Naive thymus-derived CD4-positive, alpha-beta T cell (primary cell): ENCODE measurements at regions of chr2 and their contacts with region 1.

Region 1: DNA sequence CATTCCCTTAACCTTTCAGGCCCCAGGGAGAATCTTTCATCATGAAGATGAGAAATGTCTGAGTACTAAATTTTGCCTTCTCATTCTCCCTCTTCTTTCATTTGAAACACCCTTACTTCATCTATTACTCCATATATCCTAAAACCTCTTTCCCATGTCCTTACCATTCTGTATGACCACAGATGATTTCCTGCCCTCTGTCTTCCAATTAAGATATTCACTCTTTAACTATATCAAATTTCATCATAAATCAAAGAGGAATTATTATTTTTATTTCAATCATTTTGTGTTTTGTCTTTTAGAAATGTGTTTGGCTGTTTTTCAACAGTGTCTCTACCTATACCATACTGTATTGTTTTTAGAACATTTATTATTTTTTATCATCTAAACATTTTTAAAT is 964.9 kb upstream of the KLHL29 start:
- DNase-seq: no peak
- ATAC-seq: no peak
- H3K4me3 ChIP-seq: no peak overlapping the region
- H3K4me3 Mint-ChIP-seq: no peak overlapping the region
- H3K27ac ChIP-seq: no peak overlapping the region
- H3K27ac Mint-ChIP-seq: no peak overlapping the region
- H3K4me1 ChIP-seq: no peaks in the 10 kb centered on the region
- H3K4me1 Mint-ChIP-seq: no peaks in the 10 kb centered on the region
- H3K27me3 ChIP-seq: no peaks in the 10 kb centered on the region
- H3K27me3 Mint-ChIP-seq: no peaks in the 10 kb centered on the region

Region 2: GRCh38 chr2:22134421-22134820 is 285.7 kb before region 1 on chr2:
- CTCF ChIA-PET with region 1: no interaction called
- POLR2A ChIA-PET with region 1: no interaction called
- intact Hi-C with region 1: loop called in 1 of 2 experiments (anchors 2 kb)
- DNase-seq: no peak
- ATAC-seq: no peak
- H3K4me3 ChIP-seq: no peak overlapping the region
- H3K4me3 Mint-ChIP-seq: no peak overlapping the region
- H3K27ac ChIP-seq: no peak overlapping the region
- H3K27ac Mint-ChIP-seq: no peak overlapping the region
- H3K4me1 ChIP-seq: no peaks in the 10 kb centered on the region
- H3K4me1 Mint-ChIP-seq: no peaks in the 10 kb centered on the region
- H3K27me3 ChIP-seq: no peaks in the 10 kb centered on the region
- H3K27me3 Mint-ChIP-seq: no peaks in the 10 kb centered on the region

Region 3: DNA sequence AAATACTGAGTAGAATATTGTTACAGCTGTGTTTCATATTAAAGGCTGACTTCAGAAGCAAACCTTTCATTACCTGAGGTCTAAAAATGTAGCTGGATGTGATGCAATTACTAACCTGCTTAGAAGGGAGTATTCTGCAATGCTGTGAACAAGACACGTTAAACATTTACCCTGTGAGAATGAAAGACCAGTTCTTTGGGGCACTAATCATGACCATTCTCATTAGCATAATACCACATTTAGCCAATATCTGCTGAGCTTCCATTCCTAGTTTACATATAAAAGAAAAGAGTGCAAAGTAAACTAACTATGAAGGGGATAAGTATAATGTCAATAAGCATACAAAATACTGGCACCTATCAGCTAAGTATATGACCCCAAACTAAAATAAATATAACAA is 180.9 kb after region 1 on chr2:
- CTCF ChIA-PET with region 1: no interaction called
- POLR2A ChIA-PET with region 1: no interaction called
- intact Hi-C with region 1: no loop called
- DNase-seq: no peak
- ATAC-seq: no peak
- H3K4me3 ChIP-seq: no peak overlapping the region
- H3K4me3 Mint-ChIP-seq: no peak overlapping the region
- H3K27ac ChIP-seq: no peak overlapping the region
- H3K27ac Mint-ChIP-seq: no peak overlapping the region
- H3K4me1 ChIP-seq: no peaks in the 10 kb centered on the region
- H3K4me1 Mint-ChIP-seq: peaks cover 0 to 1% (median 0%) of the 10 kb centered on the region in 7 donors
- H3K27me3 ChIP-seq: no peaks in the 10 kb centered on the region
- H3K27me3 Mint-ChIP-seq: no peaks in the 10 kb centered on the region